Activated CD8-positive, alpha-beta T cell treated with anti-CD3 and anti-CD28 coated beads, Interleukin-2, amount 10 ng/mL, durations not matched to agents 7 days and 5 days (primary cell): ENCODE measurements at regions of chr2 and their contacts with region 1.

Region 1: DNA sequence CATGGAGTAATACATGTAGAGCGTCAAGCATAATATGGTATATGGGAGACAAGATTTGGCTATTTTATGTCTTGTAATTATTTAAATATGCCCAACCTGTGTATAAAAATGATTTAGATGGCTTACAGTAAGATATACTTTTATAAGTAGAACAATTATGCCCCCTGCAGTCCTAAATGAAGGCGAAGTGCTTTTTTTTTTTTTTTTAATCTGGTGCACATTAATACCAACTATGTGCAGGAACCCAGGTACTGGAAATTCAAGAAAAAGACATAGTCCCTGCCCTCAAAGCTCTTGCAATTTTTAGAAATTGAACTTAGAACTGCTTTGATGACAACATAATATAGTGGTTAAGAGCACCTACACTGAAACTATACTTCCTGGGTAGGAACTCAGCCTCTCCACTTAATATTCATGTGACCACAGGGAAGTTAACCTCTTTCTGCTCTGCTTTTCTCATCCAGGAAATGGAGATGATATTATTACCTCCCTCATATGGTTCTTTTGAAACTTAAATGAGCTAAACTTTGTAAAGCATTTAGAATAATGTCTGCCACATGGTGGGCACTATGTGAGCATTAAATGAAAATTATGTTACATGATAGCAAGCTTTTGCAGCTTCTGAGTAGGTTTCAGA is 38.1 kb downstream of the AFTPH start:
- DNase-seq: no peak
- ATAC-seq: peak; percentile 61
- H3K4me3 Mint-ChIP-seq: no peak overlapping the region
- H3K27ac Mint-ChIP-seq: peak overlapping the region; percentile 62
- H3K4me1 Mint-ChIP-seq: peaks cover 34% of the 10 kb centered on the region
- H3K27me3 Mint-ChIP-seq: no peaks in the 10 kb centered on the region

Region 2: DNA sequence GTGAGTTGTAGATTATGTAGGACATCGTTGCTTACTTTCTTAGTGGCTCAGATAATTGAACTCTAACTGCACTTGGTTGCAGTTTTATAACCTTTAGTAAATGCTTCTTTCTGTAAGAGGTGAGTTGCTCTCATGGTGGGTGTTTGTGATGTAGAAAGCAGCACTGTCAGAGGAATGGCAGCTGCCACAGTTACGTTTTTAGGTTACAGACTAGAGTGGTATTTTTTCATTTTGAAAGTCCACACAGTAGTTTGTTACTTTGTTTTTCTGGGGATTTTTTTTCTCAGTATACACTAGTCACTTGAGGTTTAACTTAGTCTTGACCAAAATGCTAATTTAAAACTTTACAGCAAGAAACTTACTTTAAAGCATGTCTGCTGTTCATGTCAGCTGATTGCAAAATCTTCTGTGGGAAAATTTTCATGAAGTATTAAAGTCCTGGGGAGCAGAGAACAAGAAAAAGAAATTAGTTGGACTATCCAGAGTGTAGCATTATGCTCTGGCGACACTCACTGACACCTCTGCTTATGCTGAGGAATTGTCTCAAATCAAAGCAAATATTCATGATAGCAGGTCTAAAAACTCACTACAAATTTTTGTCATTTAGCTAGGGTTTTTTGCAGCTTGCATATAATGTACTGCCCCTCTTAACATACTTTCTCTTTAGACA is 23.4 kb before region 1 on chr2:
- CTCF ChIA-PET with region 1: interaction called, 10 read pairs
- POLR2A ChIA-PET with region 1: no interaction called
- DNase-seq: no peak
- ATAC-seq: no peak
- H3K4me3 Mint-ChIP-seq: no peak overlapping the region
- H3K27ac Mint-ChIP-seq: no peak overlapping the region
- H3K4me1 Mint-ChIP-seq: peaks cover 25% of the 10 kb centered on the region
- H3K27me3 Mint-ChIP-seq: no peaks in the 10 kb centered on the region

Region 3: DNA sequence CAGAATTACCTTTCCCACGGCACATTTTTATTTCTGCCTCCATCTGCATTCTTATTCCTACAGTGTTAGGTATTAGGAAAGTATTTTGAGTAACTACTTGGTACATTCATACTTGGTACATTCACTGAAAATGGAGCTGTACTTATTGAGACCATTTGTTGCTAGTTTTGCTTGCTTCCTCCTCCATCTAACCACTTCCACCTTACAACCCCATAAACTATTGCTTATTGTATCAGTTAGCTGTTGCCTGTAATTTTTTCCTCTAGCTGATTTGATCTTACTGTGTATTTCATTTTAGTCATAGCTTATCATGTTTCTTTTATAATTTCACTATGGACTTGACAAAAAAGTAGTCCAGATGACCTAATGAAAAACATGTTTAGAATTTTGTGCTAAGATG is 12.6 kb after region 1 on chr2:
- CTCF ChIA-PET with region 1: interaction called, 13 read pairs
- POLR2A ChIA-PET with region 1: interaction called, 3 read pairs
- DNase-seq: no peak
- ATAC-seq: peak; percentile 19
- H3K4me3 Mint-ChIP-seq: no peak overlapping the region
- H3K27ac Mint-ChIP-seq: peak overlapping the region; percentile 39
- H3K4me1 Mint-ChIP-seq: peaks cover 11% of the 10 kb centered on the region
- H3K27me3 Mint-ChIP-seq: no peaks in the 10 kb centered on the region